B cell (primary cell): ENCODE measurements at regions of chrX and their contacts with region 1.

Region 1: GRCh38 chrX:124045109-124045508 is 83.6 kb downstream of the STAG2 start:
- DNase-seq: no peak
- ATAC-seq: no peak
- H3K4me3 ChIP-seq: no peak overlapping the region
- H3K4me3 Mint-ChIP-seq: no peak overlapping the region
- H3K27ac ChIP-seq: no peak overlapping the region
- H3K27ac Mint-ChIP-seq: no peak overlapping the region
- H3K4me1 ChIP-seq: no peaks in the 10 kb centered on the region
- H3K4me1 Mint-ChIP-seq: no peaks in the 10 kb centered on the region
- H3K27me3 ChIP-seq: no peaks in the 10 kb centered on the region
- H3K27me3 Mint-ChIP-seq: no peaks in the 10 kb centered on the region
- CTCF ChIP-seq: no peak

Region 2: DNA sequence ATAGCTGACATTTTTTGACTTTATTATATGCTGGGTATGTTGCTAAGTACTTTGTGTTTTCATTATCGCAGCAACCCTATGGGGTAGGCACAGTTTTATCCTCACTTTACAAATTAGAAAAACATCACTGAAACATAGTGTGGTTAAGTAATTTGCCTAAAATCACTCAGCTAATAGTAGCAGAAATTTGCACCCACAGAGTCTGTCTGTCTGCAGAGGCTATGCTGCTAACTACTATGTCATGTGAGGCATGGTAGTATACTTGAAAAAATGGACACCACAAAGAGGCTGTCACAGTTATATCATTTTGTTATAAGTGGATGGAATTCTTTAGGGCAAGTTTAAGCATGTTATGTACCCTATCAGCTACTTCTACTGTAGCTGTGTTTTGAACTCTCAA is 14.6 kb before region 1 on chrX:
- CTCF ChIA-PET with region 1: no interaction called
- POLR2A ChIA-PET with region 1: no interaction called
- intact Hi-C with region 1: no loop called
- DNase-seq: no peak
- ATAC-seq: no peak
- H3K4me3 ChIP-seq: no peak overlapping the region
- H3K4me3 Mint-ChIP-seq: no peak overlapping the region
- H3K27ac ChIP-seq: peak overlapping the region in 1 of 2 donors; percentile 15
- H3K27ac Mint-ChIP-seq: no peak overlapping the region
- H3K4me1 ChIP-seq: peaks cover 0 to 3% of the 10 kb centered on the region in 2 donors
- H3K4me1 Mint-ChIP-seq: peaks cover 11% of the 10 kb centered on the region
- H3K27me3 ChIP-seq: no peaks in the 10 kb centered on the region
- H3K27me3 Mint-ChIP-seq: no peaks in the 10 kb centered on the region
- CTCF ChIP-seq: no peak

Region 3: DNA sequence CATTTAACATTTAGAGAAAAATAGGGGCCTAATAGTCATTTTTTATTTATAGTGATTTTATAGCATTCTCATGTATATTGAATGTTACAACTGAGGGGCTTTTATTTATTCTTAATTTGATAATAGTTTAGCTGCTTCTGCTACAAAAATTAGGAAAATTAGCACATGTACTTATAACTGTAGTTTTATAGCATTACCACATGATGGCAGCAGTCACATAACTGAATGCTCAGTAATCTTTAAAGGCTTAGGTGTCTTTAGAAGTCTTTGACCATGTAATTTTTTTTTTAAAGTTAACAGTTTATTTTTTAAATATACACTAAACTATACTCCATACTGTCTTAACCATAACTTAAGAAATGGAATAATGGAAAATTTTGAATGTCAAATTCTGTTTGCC is 53.0 kb after region 1 on chrX:
- CTCF ChIA-PET with region 1: no interaction called
- POLR2A ChIA-PET with region 1: no interaction called
- intact Hi-C with region 1: loop called (anchors 10 kb)
- DNase-seq: peak; percentile 23
- ATAC-seq: no peak
- H3K4me3 ChIP-seq: no peak overlapping the region
- H3K4me3 Mint-ChIP-seq: no peak overlapping the region
- H3K27ac ChIP-seq: no peak overlapping the region
- H3K27ac Mint-ChIP-seq: no peak overlapping the region
- H3K4me1 ChIP-seq: no peaks in the 10 kb centered on the region
- H3K4me1 Mint-ChIP-seq: no peaks in the 10 kb centered on the region
- H3K27me3 ChIP-seq: no peaks in the 10 kb centered on the region
- H3K27me3 Mint-ChIP-seq: no peaks in the 10 kb centered on the region
- CTCF ChIP-seq: peak; percentile 72

Region 4: DNA sequence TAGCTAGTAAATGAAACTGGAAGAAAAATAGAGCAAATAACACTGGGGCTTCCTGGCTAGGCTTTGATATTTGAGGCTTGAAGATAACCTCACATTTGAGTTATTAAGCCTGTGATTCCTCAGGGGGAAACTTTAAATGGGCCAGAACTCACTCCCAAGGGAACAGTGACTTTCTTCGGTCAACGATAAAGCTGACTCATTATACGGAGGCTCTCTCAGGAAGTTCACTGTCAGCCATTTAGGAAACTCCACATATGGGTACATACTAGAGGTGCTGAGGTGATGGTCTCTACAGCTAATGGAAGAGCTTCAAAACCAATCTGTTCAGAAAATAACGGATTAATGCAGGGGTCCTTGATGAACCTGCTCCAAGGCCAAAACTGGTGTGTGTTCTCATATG is 422.1 kb after region 1 on chrX:
- CTCF ChIA-PET with region 1: no interaction called
- POLR2A ChIA-PET with region 1: no interaction called
- intact Hi-C with region 1: no loop called
- DNase-seq: no peak
- ATAC-seq: no peak
- H3K4me3 ChIP-seq: no peak overlapping the region
- H3K4me3 Mint-ChIP-seq: no peak overlapping the region
- H3K27ac ChIP-seq: no peak overlapping the region
- H3K27ac Mint-ChIP-seq: no peak overlapping the region
- H3K4me1 ChIP-seq: no peaks in the 10 kb centered on the region
- H3K4me1 Mint-ChIP-seq: no peaks in the 10 kb centered on the region
- H3K27me3 ChIP-seq: no peaks in the 10 kb centered on the region
- H3K27me3 Mint-ChIP-seq: no peaks in the 10 kb centered on the region
- CTCF ChIP-seq: no peak